CD8-positive, alpha-beta T cell (primary cell): ENCODE measurements at regions of chr10 and their contacts with region 1.

Region 1: GRCh38 chr10:91298224-91298871 is 77.9 kb downstream of the PCGF5 start:
- DNase-seq: peak; percentile 47 to 88 (median 79)
- ATAC-seq: peak; percentile 97
- H3K4me3 ChIP-seq: peak overlapping the region; percentile 23 to 59
- H3K4me3 Mint-ChIP-seq: peak overlapping the region; percentile 73
- H3K27ac ChIP-seq: no peak overlapping the region
- H3K27ac Mint-ChIP-seq: no peak overlapping the region
- H3K4me1 ChIP-seq: peaks cover 4% of the 10 kb centered on the region
- H3K4me1 Mint-ChIP-seq: peaks cover 10% of the 10 kb centered on the region
- H3K27me3 ChIP-seq: no peaks in the 10 kb centered on the region
- H3K27me3 Mint-ChIP-seq: peaks cover 9% of the 10 kb centered on the region
- CTCF ChIP-seq: peak; percentile 92

Region 2: DNA sequence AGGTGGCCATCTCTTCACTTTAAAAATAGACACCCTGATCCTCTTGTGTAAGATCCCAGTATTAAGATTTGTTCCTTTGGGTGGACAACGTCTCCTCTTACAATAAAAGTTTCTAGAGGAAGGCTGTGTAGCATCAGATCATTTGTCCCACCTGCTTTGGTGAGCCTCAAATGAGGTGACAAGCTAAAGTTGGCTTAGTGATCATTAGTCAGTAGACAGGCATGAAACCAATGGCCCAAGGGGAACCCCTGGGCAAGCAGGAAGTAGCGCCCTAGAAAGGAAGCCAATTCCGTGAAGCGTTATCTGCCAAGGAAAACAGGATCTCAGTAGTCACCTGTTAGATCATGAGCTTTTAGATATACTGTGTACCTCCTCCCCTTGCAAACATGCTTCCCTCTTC is 11.1 kb before region 1 on chr10:
- CTCF ChIA-PET with region 1: interaction called, 43 read pairs
- POLR2A ChIA-PET with region 1: interaction called, 3 read pairs
- intact Hi-C with region 1: no loop called
- DNase-seq: no peak
- ATAC-seq: no peak
- H3K4me3 ChIP-seq: no peak overlapping the region
- H3K4me3 Mint-ChIP-seq: no peak overlapping the region
- H3K27ac ChIP-seq: no peak overlapping the region
- H3K27ac Mint-ChIP-seq: no peak overlapping the region
- H3K4me1 ChIP-seq: no peaks in the 10 kb centered on the region
- H3K4me1 Mint-ChIP-seq: no peaks in the 10 kb centered on the region
- H3K27me3 ChIP-seq: no peaks in the 10 kb centered on the region
- H3K27me3 Mint-ChIP-seq: peaks cover 4% of the 10 kb centered on the region
- CTCF ChIP-seq: no peak

Region 3: GRCh38 chr10:91328320-91328984 is 30.1 kb after region 1 on chr10:
- CTCF ChIA-PET with region 1: no interaction called
- POLR2A ChIA-PET with region 1: no interaction called
- intact Hi-C with region 1: no loop called
- DNase-seq: no peak
- ATAC-seq: no peak
- H3K4me3 ChIP-seq: no peak overlapping the region
- H3K4me3 Mint-ChIP-seq: no peak overlapping the region
- H3K27ac ChIP-seq: no peak overlapping the region
- H3K27ac Mint-ChIP-seq: no peak overlapping the region
- H3K4me1 ChIP-seq: no peaks in the 10 kb centered on the region
- H3K4me1 Mint-ChIP-seq: no peaks in the 10 kb centered on the region
- H3K27me3 ChIP-seq: no peaks in the 10 kb centered on the region
- H3K27me3 Mint-ChIP-seq: peaks cover 7% of the 10 kb centered on the region
- CTCF ChIP-seq: no peak

Region 4: DNA sequence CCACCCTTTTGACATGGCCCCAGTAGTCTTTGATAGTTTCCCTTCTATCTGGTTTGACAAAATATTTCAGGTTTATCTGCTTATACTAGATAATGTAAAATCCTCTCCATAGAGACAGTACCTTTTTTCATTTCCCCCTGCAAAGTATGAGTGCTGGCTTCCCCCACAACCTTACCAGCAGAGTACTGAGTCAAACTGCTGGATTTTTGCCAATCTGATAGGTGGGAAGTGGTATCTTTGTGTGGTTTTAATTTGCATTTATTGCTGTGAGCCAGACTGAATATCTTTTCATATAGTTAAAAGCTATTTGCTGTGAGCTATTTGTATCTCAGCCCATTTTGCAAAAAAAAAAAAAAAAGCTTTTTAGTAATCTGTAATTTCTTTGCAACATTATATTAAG is 79.7 kb after region 1 on chr10:
- CTCF ChIA-PET with region 1: interaction called, 18 read pairs
- POLR2A ChIA-PET with region 1: no interaction called
- intact Hi-C with region 1: no loop called
- DNase-seq: peak in 6 of 9 experiments; percentile 10 to 83 (median 30)
- ATAC-seq: peak; percentile 97
- H3K4me3 ChIP-seq: no peak overlapping the region
- H3K4me3 Mint-ChIP-seq: no peak overlapping the region
- H3K27ac ChIP-seq: no peak overlapping the region
- H3K27ac Mint-ChIP-seq: no peak overlapping the region
- H3K4me1 ChIP-seq: peaks cover 15% of the 10 kb centered on the region
- H3K4me1 Mint-ChIP-seq: peaks cover 25% of the 10 kb centered on the region
- H3K27me3 ChIP-seq: no peaks in the 10 kb centered on the region
- H3K27me3 Mint-ChIP-seq: peaks cover 19% of the 10 kb centered on the region
- CTCF ChIP-seq: no peak

Region 5: DNA sequence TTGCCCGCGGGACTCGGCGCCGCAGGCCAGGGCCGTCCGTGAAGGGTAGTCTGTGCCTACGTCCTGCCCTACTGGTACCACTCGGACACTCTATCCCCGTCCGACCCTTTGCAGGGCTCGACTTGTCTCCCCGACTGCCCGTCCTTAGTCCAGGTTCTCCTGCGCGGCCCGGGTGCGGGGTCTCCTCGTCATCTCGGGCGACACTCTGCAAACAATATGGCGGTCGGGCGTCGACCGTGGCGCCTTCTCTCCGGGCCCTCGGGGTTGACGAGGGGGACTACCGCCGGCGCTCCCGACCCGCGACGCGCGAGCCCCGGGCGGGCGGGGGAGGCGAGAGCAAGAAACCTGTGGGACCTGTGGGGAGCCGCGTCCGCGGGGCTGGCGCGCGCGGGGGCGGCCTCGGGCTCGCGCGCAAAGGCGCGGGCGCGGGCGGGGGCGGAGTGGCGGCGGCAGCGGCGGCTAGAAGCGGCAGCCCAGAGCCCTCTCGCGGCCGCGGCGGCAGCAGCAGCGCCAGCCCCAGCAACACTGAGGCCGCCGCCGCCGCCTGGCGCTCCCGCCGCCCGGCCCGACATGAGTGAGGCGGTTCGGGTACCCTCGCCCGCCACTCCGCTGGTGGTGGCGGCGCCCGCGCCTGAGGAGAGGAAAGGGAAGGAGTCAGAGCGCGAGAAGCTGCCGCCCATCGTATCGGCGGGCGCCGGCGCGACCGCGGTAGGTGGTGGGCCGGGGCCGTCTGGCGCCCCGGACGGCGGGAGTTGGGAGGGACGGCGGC is 111.7 kb after region 1 on chr10 and contains the start of gene HECTD2:
- CTCF ChIA-PET with region 1: interaction called, 8 read pairs
- POLR2A ChIA-PET with region 1: interaction called, 5 read pairs
- intact Hi-C with region 1: loop called (anchors 1 to 5 kb)
- DNase-seq: peak; percentile 65 to 92 (median 82)
- ATAC-seq: peak; percentile 86
- H3K4me3 ChIP-seq: peak within 1 kb of the TSS; percentile 91 to 97
- H3K4me3 Mint-ChIP-seq: peak within 1 kb of the TSS; percentile 86
- H3K27ac ChIP-seq: peak within 1 kb of the TSS; percentile 90 to 95
- H3K27ac Mint-ChIP-seq: peak within 1 kb of the TSS; percentile 90
- H3K4me1 ChIP-seq: peaks cover 12% of the 10 kb centered on the region
- H3K4me1 Mint-ChIP-seq: peaks cover 13% of the 10 kb centered on the region
- H3K27me3 ChIP-seq: no peaks in the 10 kb centered on the region
- H3K27me3 Mint-ChIP-seq: no peaks in the 10 kb centered on the region
- CTCF ChIP-seq: peak; percentile 41
- total RNA-seq, gene HECTD2: 0.69 to 1.5 TPM

Region 6: GRCh38 chr10:91632671-91633550 is 334.6 kb after region 1 on chr10 and contains the start of gene PPP1R3C:
- CTCF ChIA-PET with region 1: interaction called, 112 read pairs
- POLR2A ChIA-PET with region 1: interaction called, 4 read pairs
- intact Hi-C with region 1: loop called (anchors 1 kb)
- DNase-seq: peak in 6 of 9 experiments; percentile 9 to 47 (median 17)
- ATAC-seq: peak; percentile 46
- H3K4me3 ChIP-seq: peak within 1 kb of the TSS in 1 of 2 experiments; percentile 54
- H3K4me3 Mint-ChIP-seq: peak within 1 kb of the TSS; percentile 69
- H3K27ac ChIP-seq: no peak within 1 kb of the TSS
- H3K27ac Mint-ChIP-seq: no peak within 1 kb of the TSS
- H3K4me1 ChIP-seq: peaks cover 15% of the 10 kb centered on the region
- H3K4me1 Mint-ChIP-seq: peaks cover 9% of the 10 kb centered on the region
- H3K27me3 ChIP-seq: peaks cover 3 to 4% of the 10 kb centered on the region in 2 experiments
- H3K27me3 Mint-ChIP-seq: peaks cover 59% of the 10 kb centered on the region
- CTCF ChIP-seq: no peak
- total RNA-seq, gene PPP1R3C: not detected

Region 7: GRCh38 chr10:91758303-91759146 is 460.2 kb after region 1 on chr10:
- CTCF ChIA-PET with region 1: interaction called, 3 read pairs
- POLR2A ChIA-PET with region 1: no interaction called
- intact Hi-C with region 1: loop called in 1 of 2 experiments (anchors 2 kb)
- DNase-seq: peak in 2 of 9 experiments; percentile 67 to 77
- ATAC-seq: peak; percentile 78
- H3K4me3 ChIP-seq: no peak overlapping the region
- H3K4me3 Mint-ChIP-seq: no peak overlapping the region
- H3K27ac ChIP-seq: no peak overlapping the region
- H3K27ac Mint-ChIP-seq: no peak overlapping the region
- H3K4me1 ChIP-seq: no peaks in the 10 kb centered on the region
- H3K4me1 Mint-ChIP-seq: peaks cover 5% of the 10 kb centered on the region
- H3K27me3 ChIP-seq: no peaks in the 10 kb centered on the region
- H3K27me3 Mint-ChIP-seq: peaks cover 11% of the 10 kb centered on the region
- CTCF ChIP-seq: peak; percentile 74

Region 8: GRCh38 chr10:92432596-92432995 is 1134.2 kb after region 1 on chr10:
- CTCF ChIA-PET with region 1: no interaction called
- POLR2A ChIA-PET with region 1: no interaction called
- intact Hi-C with region 1: loop called in 1 of 2 experiments (anchors 10 kb)
- DNase-seq: no peak
- ATAC-seq: no peak
- H3K4me3 ChIP-seq: no peak overlapping the region
- H3K4me3 Mint-ChIP-seq: no peak overlapping the region
- H3K27ac ChIP-seq: no peak overlapping the region
- H3K27ac Mint-ChIP-seq: no peak overlapping the region
- H3K4me1 ChIP-seq: no peaks in the 10 kb centered on the region
- H3K4me1 Mint-ChIP-seq: no peaks in the 10 kb centered on the region
- H3K27me3 ChIP-seq: no peaks in the 10 kb centered on the region
- H3K27me3 Mint-ChIP-seq: no peaks in the 10 kb centered on the region
- CTCF ChIP-seq: no peak